Ovary (tissue), 10 donors: ENCODE measurements at regions of chr16 and their contacts with region 1.

Region 1: GRCh38 chr16:54418903-54419302 is 132.3 kb upstream of the IRX3 start:
- DNase-seq: no peak
- H3K4me3 ChIP-seq: no peak overlapping the region
- H3K27ac ChIP-seq: no peak overlapping the region
- H3K4me1 ChIP-seq: peaks cover 1% of the 10 kb centered on the region
- H3K27me3 ChIP-seq: no peaks in the 10 kb centered on the region
- CTCF ChIP-seq: no peak
- EP300 ChIP-seq: no peak
- POLR2A ChIP-seq: no peak

Region 2: DNA sequence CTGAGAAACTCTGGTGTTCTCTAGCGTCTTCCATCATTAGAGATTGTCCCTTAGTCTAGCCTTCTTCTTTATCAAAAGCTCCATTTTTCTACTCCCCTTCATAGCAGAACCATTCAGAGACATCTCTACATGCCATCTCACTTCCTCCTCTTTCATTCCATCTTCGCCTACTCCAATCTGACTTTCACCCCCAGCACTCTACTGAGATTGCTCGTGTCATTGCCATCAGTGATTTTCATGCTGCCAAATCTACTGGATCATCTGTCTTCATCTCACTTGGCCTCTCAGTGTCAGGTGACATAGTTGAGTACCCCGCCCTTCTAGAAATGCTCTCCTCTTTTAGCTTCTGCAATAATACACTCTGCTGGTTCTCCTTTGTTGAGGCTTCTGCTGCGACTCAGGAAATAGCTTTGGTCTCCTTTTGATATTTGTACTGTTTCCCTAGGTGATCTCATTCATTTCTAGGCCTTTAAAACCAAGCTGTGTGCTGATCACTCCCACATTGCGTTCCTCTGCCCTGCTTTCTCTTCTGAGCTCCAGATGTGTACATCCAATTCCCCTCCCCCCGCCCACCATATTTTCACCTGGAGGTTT is 595.9 kb before region 1 on chr16:
- intact Hi-C with region 1: no loop called
- DNase-seq: no peak
- H3K4me3 ChIP-seq: no peak overlapping the region
- H3K27ac ChIP-seq: no peak overlapping the region
- H3K4me1 ChIP-seq: no peaks in the 10 kb centered on the region
- H3K27me3 ChIP-seq: no peaks in the 10 kb centered on the region
- CTCF ChIP-seq: no peak
- EP300 ChIP-seq: no peak
- POLR2A ChIP-seq: no peak

Region 3: DNA sequence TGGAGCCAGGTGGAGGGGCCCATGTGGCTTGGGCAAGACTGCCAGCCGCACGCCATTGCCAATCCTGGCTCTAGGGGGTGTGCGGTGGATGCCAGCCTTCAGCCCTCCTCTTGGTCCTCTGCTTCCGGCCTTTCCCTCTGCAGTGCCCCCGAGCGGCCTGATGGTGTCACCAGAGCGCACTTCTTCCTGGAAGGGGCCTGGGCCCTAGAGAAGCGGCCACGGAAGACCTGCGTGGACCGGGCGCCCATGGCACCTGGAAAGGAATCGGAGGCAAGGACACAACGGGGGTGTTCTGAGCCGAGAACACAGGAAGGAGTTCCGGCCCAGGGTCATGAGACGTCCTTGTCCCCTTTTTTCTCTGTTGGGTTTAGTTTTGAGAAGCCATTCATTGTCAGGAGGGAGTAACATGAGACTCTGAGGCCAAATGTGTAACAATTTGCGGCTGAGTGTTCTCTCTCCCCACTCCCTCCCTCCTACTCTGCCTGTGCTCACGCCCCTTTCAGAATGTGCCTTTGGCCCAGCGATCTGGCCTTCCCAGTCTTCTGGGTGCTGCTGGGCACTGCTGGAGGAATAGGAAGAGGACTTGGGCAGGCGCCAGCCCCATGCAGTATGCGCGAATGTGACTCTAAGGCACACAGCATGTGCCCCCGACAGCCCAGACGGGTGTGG is 225.1 kb before region 1 on chr16:
- intact Hi-C with region 1: loop called in 1 of 4 experiments (anchors 5 kb)
- DNase-seq: peak; percentile 22 to 82 (median 52)
- H3K4me3 ChIP-seq: no peak overlapping the region
- H3K27ac ChIP-seq: peak overlapping the region in 1 of 2 donors; percentile 46
- H3K4me1 ChIP-seq: no peaks in the 10 kb centered on the region
- H3K27me3 ChIP-seq: no peaks in the 10 kb centered on the region
- CTCF ChIP-seq: peak in 2 of 3 donors; percentile 27 to 36
- EP300 ChIP-seq: no peak
- POLR2A ChIP-seq: no peak